Right cardiac atrium (tissue), 5 donors: ENCODE measurements at regions of chr1 and their contacts with region 1.

Region 1: DNA sequence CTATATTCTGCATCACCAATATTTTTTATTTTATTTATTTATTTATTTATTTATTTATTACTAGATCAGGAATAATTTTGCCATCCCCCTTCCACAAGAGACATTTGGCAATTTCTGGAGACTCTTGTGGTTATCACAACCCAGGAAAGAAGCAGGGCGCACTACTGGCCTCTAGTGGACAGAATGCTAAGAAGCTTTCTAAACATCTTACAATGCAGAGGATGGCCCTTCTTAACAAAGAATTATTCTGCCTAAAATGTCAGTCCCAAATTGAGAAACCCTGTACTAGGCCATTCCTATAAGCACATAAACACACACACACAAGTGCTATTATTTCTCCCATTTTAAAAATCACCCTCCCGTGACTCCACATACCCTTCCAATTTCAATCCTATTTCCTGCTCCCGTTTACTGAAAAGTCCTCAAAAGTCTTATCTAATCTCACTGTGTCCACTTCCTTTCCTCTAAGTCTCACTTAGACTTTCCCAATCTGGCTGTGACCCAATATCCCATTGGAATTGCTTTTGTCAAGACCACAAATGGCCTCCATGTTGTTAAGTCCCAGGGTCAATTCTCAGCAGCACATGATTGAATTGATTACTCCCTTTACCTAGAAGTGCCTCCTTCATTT is 43.7 kb upstream of the RNF11 start:
- DNase-seq: peak; percentile 60 to 85 (median 71)
- ATAC-seq: peak; percentile 64 to 76
- H3K4me3 ChIP-seq: no peak overlapping the region
- H3K27ac ChIP-seq: no peak overlapping the region
- H3K4me1 ChIP-seq: no peaks in the 10 kb centered on the region
- H3K27me3 ChIP-seq: no peaks in the 10 kb centered on the region

Region 2: GRCh38 chr1:50774759-50775351 is 417.5 kb before region 1 on chr1:
- intact Hi-C with region 1: loop called in 2 of 4 experiments (anchors 2 to 10 kb)
- DNase-seq: no peak
- ATAC-seq: peak in 1 of 2 donors; percentile 32
- H3K4me3 ChIP-seq: no peak overlapping the region
- H3K27ac ChIP-seq: no peak overlapping the region
- H3K4me1 ChIP-seq: no peaks in the 10 kb centered on the region
- H3K27me3 ChIP-seq: no peaks in the 10 kb centered on the region

Region 3: GRCh38 chr1:51253691-51254090 is 61.4 kb after region 1 on chr1:
- intact Hi-C with region 1: no loop called
- DNase-seq: no peak
- ATAC-seq: no peak
- H3K4me3 ChIP-seq: no peak overlapping the region
- H3K27ac ChIP-seq: no peak overlapping the region
- H3K4me1 ChIP-seq: peaks cover 1% of the 10 kb centered on the region
- H3K27me3 ChIP-seq: no peaks in the 10 kb centered on the region